OCI-LY7 (cell line): ENCODE measurements at regions of chr1 and their contacts with region 1.

Region 1: DNA sequence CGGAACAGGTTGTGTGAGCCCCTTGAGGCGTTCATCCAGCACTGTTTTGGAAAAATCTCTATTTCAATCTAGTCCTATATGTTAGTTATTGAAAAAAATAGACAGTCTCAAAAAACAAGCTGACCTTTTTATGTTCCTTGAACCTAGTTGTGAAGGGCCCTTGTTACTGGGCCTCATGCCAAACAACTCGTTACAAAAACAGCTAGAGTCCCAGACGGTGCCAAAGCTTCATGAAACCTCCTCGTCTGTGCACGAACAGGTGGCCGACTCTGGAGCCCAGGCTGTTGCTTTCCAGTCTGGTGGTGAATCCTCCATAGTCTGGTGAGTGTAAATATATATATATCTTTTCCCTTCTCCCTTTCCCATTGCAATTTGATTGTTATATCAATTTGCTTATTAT is at the start of gene CHIA:
- DNase-seq: no peak
- H3K4me3 ChIP-seq: no peak within 1 kb of the TSS
- H3K27ac ChIP-seq: no peak within 1 kb of the TSS
- H3K4me1 ChIP-seq: no peaks in the 10 kb centered on the region
- CTCF ChIP-seq: no peak
- total RNA-seq, gene CHIA: not detected in 2 replicates

Region 2: GRCh38 chr1:110948038-110948810 is 342.4 kb before region 1 on chr1:
- CTCF ChIA-PET with region 1: no interaction called
- POLR2A ChIA-PET with region 1: no interaction called
- intact Hi-C with region 1: no loop called
- DNase-seq: no peak
- H3K4me3 ChIP-seq: no peak overlapping the region
- H3K27ac ChIP-seq: no peak overlapping the region
- H3K4me1 ChIP-seq: no peaks in the 10 kb centered on the region
- CTCF ChIP-seq: no peak

Region 3: GRCh38 chr1:111101854-111102642 is 188.6 kb before region 1 on chr1:
- CTCF ChIA-PET with region 1: no interaction called
- POLR2A ChIA-PET with region 1: no interaction called
- intact Hi-C with region 1: no loop called
- DNase-seq: no peak
- H3K4me3 ChIP-seq: no peak overlapping the region
- H3K27ac ChIP-seq: no peak overlapping the region
- H3K4me1 ChIP-seq: no peaks in the 10 kb centered on the region
- CTCF ChIP-seq: no peak

Region 4: DNA sequence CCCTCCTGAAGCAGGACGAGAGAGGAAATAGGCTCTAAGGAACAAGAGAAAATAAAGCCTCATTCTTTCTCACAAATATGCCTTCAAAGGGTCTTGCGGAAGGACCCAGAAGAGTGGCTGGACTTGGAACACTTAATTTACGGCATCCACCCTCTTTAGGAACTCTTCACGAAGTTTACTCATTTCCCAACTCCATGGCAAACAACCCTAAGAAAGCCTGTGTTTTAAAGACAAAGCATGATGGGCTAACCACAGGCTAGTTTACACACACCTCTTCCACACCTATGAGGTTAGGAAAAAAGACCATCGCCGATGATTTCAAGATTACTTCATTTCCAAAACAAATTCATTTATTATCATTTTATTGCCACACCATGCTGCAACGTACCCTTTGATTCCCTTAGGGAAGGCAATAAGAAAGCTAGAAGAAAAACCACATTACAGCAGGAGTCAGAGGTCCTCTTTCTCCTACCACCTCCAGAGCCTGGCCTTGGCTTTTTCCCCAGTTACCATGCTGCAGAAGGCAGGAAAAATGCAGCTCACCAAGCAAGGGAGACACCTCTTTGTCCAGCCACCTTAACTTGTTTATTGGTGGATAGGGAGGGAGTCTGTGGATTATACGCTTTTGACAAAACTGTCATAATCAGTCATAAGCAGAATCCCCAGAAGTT is 33.5 kb before region 1 on chr1:
- CTCF ChIA-PET with region 1: no interaction called
- POLR2A ChIA-PET with region 1: no interaction called
- intact Hi-C with region 1: loop called (anchors 5 kb)
- DNase-seq: no peak
- H3K4me3 ChIP-seq: no peak overlapping the region
- H3K27ac ChIP-seq: no peak overlapping the region
- H3K4me1 ChIP-seq: no peaks in the 10 kb centered on the region
- CTCF ChIP-seq: no peak

Region 5: GRCh38 chr1:111275079-111275478 is 15.6 kb before region 1 on chr1:
- CTCF ChIA-PET with region 1: no interaction called
- POLR2A ChIA-PET with region 1: no interaction called
- intact Hi-C with region 1: no loop called
- DNase-seq: no peak
- H3K4me3 ChIP-seq: no peak overlapping the region
- H3K27ac ChIP-seq: no peak overlapping the region
- H3K4me1 ChIP-seq: no peaks in the 10 kb centered on the region
- CTCF ChIP-seq: no peak